ENCODE measurements at regions of chr10 and their contacts with region 1.

Region 1: DNA sequence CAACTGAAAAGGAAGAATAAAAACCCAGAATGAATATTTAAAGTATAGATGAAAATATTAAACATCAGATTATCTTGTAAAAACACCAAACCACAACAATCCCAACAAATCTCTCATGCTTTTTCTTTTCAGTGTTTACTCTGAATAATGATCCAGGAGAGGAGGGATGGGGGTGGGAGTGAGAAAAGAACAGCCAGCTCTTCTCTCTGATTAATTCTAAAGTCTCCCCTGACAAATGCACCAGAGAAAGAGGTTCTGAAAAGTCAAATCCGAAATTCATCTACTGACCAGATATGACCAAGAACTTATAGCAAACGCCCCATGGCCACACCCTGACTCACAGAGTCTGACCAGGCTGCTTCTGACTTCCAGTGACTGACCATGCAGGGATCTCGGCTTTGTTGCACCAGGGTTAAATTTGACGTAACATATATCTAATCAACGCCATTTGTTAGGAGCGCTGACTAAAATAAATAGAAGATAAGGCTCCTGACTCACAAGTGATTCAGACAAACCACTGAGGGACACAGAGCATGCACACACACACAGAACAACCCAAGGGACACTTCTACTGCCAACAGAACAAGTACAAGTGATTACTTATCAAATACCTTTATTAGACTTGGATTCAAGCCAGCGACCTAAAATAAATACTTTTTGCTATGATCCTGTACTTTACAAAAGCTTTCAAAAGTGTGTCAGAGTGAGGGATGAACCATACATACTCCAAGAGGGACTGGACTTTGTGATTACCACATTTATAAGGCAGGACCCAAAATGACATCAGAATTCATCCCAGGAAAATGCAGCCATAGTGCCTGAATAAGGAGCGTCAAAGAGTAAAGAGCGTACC is 9.3 kb upstream of the SPOCK2 start:
- DNase-seq: peak in 1 of 2 donors; percentile 36
- ATAC-seq: peak; percentile 57 to 96 (median 91)
- H3K4me3 ChIP-seq: no peak overlapping the region
- H3K27ac ChIP-seq: peak overlapping the region in 6 of 10 donors; percentile 14 to 61 (median 42)
- H3K4me1 ChIP-seq: peaks cover 0 to 24% (median 18%) of the 10 kb centered on the region in 9 donors
- H3K27me3 ChIP-seq: no peaks in the 10 kb centered on the region
- CTCF ChIP-seq: no peak

Region 2: DNA sequence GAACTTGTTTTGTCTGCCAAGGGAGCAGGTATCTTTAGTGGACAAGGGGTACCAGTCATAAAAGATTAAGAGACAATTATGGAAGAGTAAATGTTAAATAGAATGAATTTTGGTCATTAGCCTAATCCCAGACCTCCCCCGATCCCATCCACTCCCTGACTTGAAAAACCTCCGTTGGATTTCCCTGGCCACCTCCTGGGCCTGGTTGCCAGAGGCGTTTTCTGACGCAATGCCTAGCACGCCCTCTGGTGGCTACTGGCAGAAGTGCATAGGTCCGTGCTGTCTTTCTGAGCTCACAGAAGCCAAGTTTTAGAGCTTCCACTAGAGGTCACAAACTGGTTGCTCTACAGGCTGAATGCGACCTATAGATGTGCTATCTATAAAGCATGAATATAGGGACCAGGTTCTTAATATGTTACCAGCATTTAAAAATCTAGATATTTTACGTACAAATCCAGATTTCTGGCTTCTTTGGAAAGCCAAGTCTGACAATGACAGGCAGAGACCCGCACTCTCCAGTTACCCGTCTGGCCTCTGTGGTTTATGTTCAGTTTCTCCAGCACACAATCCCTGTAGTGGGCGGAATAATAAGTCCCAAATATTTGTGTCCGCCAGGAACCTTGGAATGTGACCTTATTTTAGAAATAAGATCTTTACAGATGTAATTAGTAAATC is 49.1 kb before region 1 on chr10:
- intact Hi-C with region 1: no loop called
- DNase-seq: peak; percentile 94
- ATAC-seq: peak; percentile 58 to 91 (median 84)
- H3K4me3 ChIP-seq: no peak overlapping the region
- H3K27ac ChIP-seq: no peak overlapping the region
- H3K4me1 ChIP-seq: peaks cover 0 to 25% (median 10%) of the 10 kb centered on the region in 9 donors
- H3K27me3 ChIP-seq: no peaks in the 10 kb centered on the region
- CTCF ChIP-seq: peak; percentile 99 to 100 (median 100)

Region 3: GRCh38 chr10:72058989-72059842 is 38.5 kb before region 1 on chr10:
- intact Hi-C with region 1: loop called in 1 of 10 experiments (anchors 5 kb)
- DNase-seq: no peak
- ATAC-seq: no peak
- H3K4me3 ChIP-seq: no peak overlapping the region
- H3K27ac ChIP-seq: peak overlapping the region in 1 of 10 donors; percentile 26
- H3K4me1 ChIP-seq: peaks cover 0 to 17% (median 4%) of the 10 kb centered on the region in 9 donors
- H3K27me3 ChIP-seq: no peaks in the 10 kb centered on the region
- CTCF ChIP-seq: no peak

Region 4: GRCh38 chr10:72688207-72688651 is 590.6 kb after region 1 on chr10:
- intact Hi-C with region 1: no loop called
- DNase-seq: no peak
- ATAC-seq: no peak
- H3K4me3 ChIP-seq: no peak overlapping the region
- H3K27ac ChIP-seq: no peak overlapping the region
- H3K4me1 ChIP-seq: peaks cover 0 to 11% (median 6%) of the 10 kb centered on the region in 9 donors
- H3K27me3 ChIP-seq: no peaks in the 10 kb centered on the region
- CTCF ChIP-seq: no peak